ENCODE measurements at regions of chr11 and their contacts with region 1.

Region 1: GRCh38 chr11:27183672-27184457 is 143.2 kb downstream of the BBOX1 start:
- DNase-seq: peak in 1 of 3 donors; percentile 86
- ATAC-seq: peak; percentile 54
- H3K4me3 ChIP-seq: no peak overlapping the region
- H3K4me1 ChIP-seq: peaks cover 16% of the 10 kb centered on the region
- CTCF ChIP-seq: peak; percentile 35

Region 2: GRCh38 chr11:26974069-26974783 is 209.6 kb before region 1 on chr11:
- intact Hi-C with region 1: no loop called
- DNase-seq: no peak
- ATAC-seq: no peak
- H3K4me3 ChIP-seq: no peak overlapping the region
- H3K4me1 ChIP-seq: no peaks in the 10 kb centered on the region
- CTCF ChIP-seq: no peak

Region 3: GRCh38 chr11:27139742-27140367 is 44.0 kb before region 1 on chr11:
- intact Hi-C with region 1: no loop called
- DNase-seq: no peak
- ATAC-seq: no peak
- H3K4me3 ChIP-seq: no peak overlapping the region
- H3K4me1 ChIP-seq: no peaks in the 10 kb centered on the region
- CTCF ChIP-seq: no peak

Region 4: DNA sequence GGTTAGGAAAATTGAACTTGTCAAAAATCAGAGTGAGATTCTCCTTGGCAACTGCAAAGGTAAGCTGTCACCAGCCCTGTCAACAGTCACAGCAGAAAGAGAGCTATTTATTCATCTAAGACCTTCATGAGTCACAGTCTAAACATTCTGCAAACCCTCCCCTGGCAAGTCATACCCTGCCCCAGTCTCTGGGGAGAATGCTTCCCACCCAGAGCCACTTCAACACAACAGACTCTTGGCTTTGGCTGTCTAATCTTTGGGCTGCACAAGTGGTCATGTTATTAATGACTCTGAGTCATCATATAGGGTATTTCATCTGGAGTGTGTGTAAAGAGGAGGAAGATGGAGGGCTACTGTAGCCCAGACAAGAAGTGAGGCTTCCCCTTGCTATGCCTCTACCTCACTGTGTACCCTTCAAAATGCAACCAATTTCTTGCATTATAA is 25.7 kb after region 1 on chr11:
- intact Hi-C with region 1: no loop called
- DNase-seq: no peak
- ATAC-seq: peak; percentile 64
- H3K4me3 ChIP-seq: no peak overlapping the region
- H3K4me1 ChIP-seq: peaks cover 17% of the 10 kb centered on the region
- CTCF ChIP-seq: no peak

Region 5: DNA sequence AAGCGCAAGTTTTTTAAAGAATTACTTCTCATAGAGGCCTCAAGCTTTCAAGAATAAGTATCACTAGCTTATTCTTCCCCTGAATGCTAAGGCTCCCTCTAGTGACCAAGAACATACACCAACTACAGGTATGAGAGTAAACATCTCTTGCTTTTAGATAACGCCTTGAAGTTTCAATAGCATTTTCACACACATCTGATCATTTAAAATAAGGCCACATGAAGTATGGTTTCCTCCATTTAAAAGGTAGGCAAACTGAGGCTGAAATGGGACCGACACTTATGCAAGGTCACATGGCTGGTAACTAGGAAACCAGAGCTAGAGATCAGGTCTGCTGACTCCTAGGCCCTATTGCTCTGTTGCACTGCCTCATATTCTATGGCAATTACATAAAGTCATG is 112.6 kb after region 1 on chr11:
- intact Hi-C with region 1: loop called (anchors 1 to 10 kb)
- DNase-seq: peak in 1 of 3 donors; percentile 46
- ATAC-seq: peak; percentile 45
- H3K4me3 ChIP-seq: no peak overlapping the region
- H3K4me1 ChIP-seq: peaks cover 28% of the 10 kb centered on the region
- CTCF ChIP-seq: peak; percentile 24

Region 6: GRCh38 chr11:27472398-27473016 is 288.6 kb after region 1 on chr11 and contains the start of gene LGR4:
- intact Hi-C with region 1: loop called in 1 of 2 experiments (anchors 5 kb)
- DNase-seq: peak; percentile 94 to 95 (median 95)
- ATAC-seq: peak; percentile 86
- H3K4me3 ChIP-seq: peak within 1 kb of the TSS; percentile 94
- H3K4me1 ChIP-seq: peaks cover 7% of the 10 kb centered on the region
- CTCF ChIP-seq: no peak
- total RNA-seq, gene LGR4: 81.9 to 185 (median 104) TPM

Region 7: GRCh38 chr11:27485930-27486773 is 302.3 kb after region 1 on chr11:
- intact Hi-C with region 1: loop called (anchors 5 kb)
- DNase-seq: peak in 1 of 3 donors; percentile 84
- ATAC-seq: peak; percentile 65
- H3K4me3 ChIP-seq: no peak overlapping the region
- H3K4me1 ChIP-seq: no peaks in the 10 kb centered on the region
- CTCF ChIP-seq: peak; percentile 59